Activated CD8-positive, alpha-beta T cell treated with anti-CD3 and anti-CD28 coated beads for 36 hours (primary cell): ENCODE measurements at regions of chr2 and their contacts with region 1.

Region 1: DNA sequence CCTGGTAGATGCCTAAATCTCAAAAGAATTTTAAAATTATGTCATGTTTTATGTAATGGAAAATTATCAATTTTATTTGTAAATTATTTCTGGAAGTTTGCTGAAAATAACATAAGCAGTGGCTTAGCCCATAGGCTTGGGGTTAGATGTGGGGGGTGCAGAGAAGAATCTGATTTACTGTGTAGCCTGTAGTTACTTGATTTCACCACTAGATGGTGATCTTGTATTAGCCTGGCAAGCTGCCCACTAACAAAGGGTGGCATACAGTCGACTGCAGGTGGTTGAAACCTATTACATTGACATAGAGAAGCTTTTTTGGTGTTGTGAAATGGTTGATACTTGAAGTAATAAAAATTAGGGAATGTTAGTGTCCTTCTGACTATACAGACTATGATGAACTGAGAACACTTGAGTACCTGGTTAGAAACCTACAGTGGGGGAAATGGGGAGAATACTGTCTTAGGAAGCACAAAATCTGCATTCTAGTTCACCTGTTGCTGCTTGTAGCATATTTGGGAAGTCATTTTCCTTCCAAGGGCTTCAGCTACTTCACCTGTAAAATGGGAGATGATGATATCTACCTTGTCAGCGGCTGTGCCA is 191.0 kb upstream of the LHCGR start:
- DNase-seq: peak; percentile 15
- ATAC-seq: peak; percentile 77
- H3K4me3 Mint-ChIP-seq: no peak overlapping the region
- H3K27ac Mint-ChIP-seq: no peak overlapping the region
- H3K4me1 Mint-ChIP-seq: no peaks in the 10 kb centered on the region
- H3K27me3 Mint-ChIP-seq: peaks cover 5% of the 10 kb centered on the region
- CTCF ChIP-seq: peak; percentile 80

Region 2: GRCh38 chr2:48961009-48961408 is 14.5 kb after region 1 on chr2:
- CTCF ChIA-PET with region 1: interaction called, 14 read pairs
- POLR2A ChIA-PET with region 1: no interaction called
- intact Hi-C with region 1: no loop called
- DNase-seq: no peak
- ATAC-seq: no peak
- H3K4me3 Mint-ChIP-seq: no peak overlapping the region
- H3K27ac Mint-ChIP-seq: no peak overlapping the region
- H3K4me1 Mint-ChIP-seq: no peaks in the 10 kb centered on the region
- H3K27me3 Mint-ChIP-seq: peaks cover 2% of the 10 kb centered on the region
- CTCF ChIP-seq: no peak

Region 3: GRCh38 chr2:48971801-48972200 is 25.3 kb after region 1 on chr2:
- CTCF ChIA-PET with region 1: no interaction called
- POLR2A ChIA-PET with region 1: no interaction called
- intact Hi-C with region 1: no loop called
- DNase-seq: no peak
- ATAC-seq: no peak
- H3K4me3 Mint-ChIP-seq: no peak overlapping the region
- H3K27ac Mint-ChIP-seq: no peak overlapping the region
- H3K4me1 Mint-ChIP-seq: no peaks in the 10 kb centered on the region
- H3K27me3 Mint-ChIP-seq: no peaks in the 10 kb centered on the region
- CTCF ChIP-seq: no peak

Region 4: DNA sequence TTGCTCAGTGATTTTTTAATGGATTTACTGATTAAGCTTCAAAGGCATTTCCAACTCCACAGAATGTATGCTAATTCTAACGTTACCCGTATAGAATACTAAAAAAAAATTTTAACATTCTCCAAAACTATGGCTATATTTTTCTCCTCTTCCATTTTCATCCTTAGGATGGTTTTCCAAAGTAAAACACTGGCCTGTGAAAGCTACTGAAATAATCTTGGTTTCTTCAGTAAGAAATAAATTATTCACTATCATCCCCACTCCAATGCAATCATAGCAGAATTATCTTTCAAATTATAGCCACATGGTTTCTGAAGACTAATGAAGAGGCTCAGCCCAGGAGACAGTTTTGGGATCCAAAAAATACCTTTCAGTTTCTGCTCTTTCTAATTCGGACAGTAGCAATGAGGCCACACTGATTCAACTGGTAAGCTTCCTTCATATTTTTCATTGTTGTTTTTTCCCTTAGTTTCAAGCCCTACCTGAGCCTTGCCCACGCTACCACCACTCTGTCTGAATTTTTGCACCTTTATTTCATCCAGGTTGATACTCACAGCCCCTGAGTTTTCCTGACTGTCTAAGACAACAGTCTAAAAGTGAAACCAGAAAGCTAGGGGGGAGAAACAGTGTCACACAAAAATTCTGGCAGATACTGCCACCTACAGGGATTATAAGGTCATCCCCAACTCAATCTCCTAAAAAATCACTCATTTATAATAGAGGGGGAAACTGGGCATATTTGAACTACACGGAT is 1197.5 kb after region 1 on chr2:
- CTCF ChIA-PET with region 1: no interaction called
- POLR2A ChIA-PET with region 1: no interaction called
- intact Hi-C with region 1: loop called (anchors 10 kb)
- DNase-seq: peak; percentile 1
- ATAC-seq: no peak
- H3K4me3 Mint-ChIP-seq: peak overlapping the region; percentile 59
- H3K27ac Mint-ChIP-seq: no peak overlapping the region
- H3K4me1 Mint-ChIP-seq: peaks cover 2% of the 10 kb centered on the region
- H3K27me3 Mint-ChIP-seq: no peaks in the 10 kb centered on the region
- CTCF ChIP-seq: no peak

Region 5: DNA sequence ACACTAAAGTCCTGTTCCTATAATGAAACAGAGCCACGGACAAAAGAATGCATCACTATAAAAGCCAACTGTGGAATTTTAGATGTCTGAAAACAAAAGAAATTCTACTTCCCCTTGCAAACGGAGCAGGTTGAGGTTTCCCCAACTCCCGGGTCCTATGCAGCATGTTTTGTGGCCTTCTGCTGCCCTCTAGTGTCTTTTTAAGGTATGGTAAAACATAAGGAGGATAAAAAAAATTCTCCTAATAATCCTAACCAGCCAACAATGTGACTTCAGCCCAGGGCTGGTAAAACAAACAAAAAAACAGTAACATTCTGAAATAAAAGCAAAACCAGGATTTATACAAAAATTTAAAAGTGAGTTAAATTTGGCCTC is 1545.9 kb after region 1 on chr2:
- CTCF ChIA-PET with region 1: interaction called, 10 read pairs
- POLR2A ChIA-PET with region 1: no interaction called
- intact Hi-C with region 1: loop called (anchors 1 kb)
- DNase-seq: peak; percentile 36
- ATAC-seq: peak; percentile 65
- H3K4me3 Mint-ChIP-seq: no peak overlapping the region
- H3K27ac Mint-ChIP-seq: no peak overlapping the region
- H3K4me1 Mint-ChIP-seq: peaks cover 5% of the 10 kb centered on the region
- H3K27me3 Mint-ChIP-seq: no peaks in the 10 kb centered on the region
- CTCF ChIP-seq: peak; percentile 62